ENCODE measurements at regions of chr7 and their contacts with region 1.

Region 1: GRCh38 chr7:117034851-117035464 is 81.7 kb downstream of the ST7 start:
- DNase-seq: peak; percentile 90
- H3K4me3 ChIP-seq: no peak overlapping the region
- H3K27ac ChIP-seq: peak overlapping the region; percentile 46
- H3K4me1 ChIP-seq: peaks cover 19% of the 10 kb centered on the region
- H3K27me3 ChIP-seq: no peaks in the 10 kb centered on the region
- CTCF ChIP-seq: no peak
- POLR2A ChIP-seq: no peak

Region 2: GRCh38 chr7:117019786-117020590 is 15.0 kb before region 1 on chr7:
- CTCF ChIA-PET with region 1: interaction called, 5 read pairs
- POLR2A ChIA-PET with region 1: no interaction called
- dilution Hi-C with region 1: no loop called
- intact Hi-C with region 1: loop called (anchors 2 kb)
- DNase-seq: peak; percentile 91
- H3K4me3 ChIP-seq: peak overlapping the region in 1 of 3 experiments; percentile 44
- H3K27ac ChIP-seq: peak overlapping the region; percentile 62
- H3K4me1 ChIP-seq: peaks cover 18% of the 10 kb centered on the region
- H3K27me3 ChIP-seq: no peaks in the 10 kb centered on the region
- CTCF ChIP-seq: no peak
- POLR2A ChIP-seq: no peak

Region 3: GRCh38 chr7:117061751-117062150 is 26.8 kb after region 1 on chr7:
- CTCF ChIA-PET with region 1: interaction called, 3 read pairs
- POLR2A ChIA-PET with region 1: no interaction called
- dilution Hi-C with region 1: no loop called
- intact Hi-C with region 1: loop called (anchors 2 kb)
- DNase-seq: no peak
- H3K4me3 ChIP-seq: no peak overlapping the region
- H3K27ac ChIP-seq: no peak overlapping the region
- H3K4me1 ChIP-seq: no peaks in the 10 kb centered on the region
- H3K27me3 ChIP-seq: no peaks in the 10 kb centered on the region
- CTCF ChIP-seq: no peak
- POLR2A ChIP-seq: no peak